ENCODE measurements at regions of chr3 and their contacts with region 1.

Region 1: DNA sequence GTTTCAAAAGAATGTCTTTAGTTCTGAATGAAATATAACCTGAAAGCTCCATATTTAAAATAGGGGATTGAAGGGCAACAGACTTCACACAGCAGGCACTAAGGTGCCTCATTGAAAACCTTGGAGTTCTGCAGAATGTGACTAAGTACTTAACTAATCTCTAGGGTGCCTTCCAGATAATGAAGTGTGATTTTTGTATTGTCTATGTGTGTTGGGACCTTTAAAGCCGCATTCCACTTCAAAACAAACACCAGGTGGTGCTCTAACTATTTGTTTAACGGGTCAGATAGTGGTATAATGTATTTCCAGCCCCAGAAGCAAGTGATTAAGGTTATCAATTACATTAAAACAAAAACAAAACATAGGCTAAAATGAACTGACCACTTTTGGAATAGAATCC is 28.0 kb downstream of the TFG start:
- DNase-seq: no peak
- H3K4me3 ChIP-seq: no peak overlapping the region
- H3K27ac ChIP-seq: no peak overlapping the region
- H3K4me1 ChIP-seq: no peaks in the 10 kb centered on the region
- H3K27me3 ChIP-seq: no peaks in the 10 kb centered on the region
- CTCF ChIP-seq: peak; percentile 76

Region 2: DNA sequence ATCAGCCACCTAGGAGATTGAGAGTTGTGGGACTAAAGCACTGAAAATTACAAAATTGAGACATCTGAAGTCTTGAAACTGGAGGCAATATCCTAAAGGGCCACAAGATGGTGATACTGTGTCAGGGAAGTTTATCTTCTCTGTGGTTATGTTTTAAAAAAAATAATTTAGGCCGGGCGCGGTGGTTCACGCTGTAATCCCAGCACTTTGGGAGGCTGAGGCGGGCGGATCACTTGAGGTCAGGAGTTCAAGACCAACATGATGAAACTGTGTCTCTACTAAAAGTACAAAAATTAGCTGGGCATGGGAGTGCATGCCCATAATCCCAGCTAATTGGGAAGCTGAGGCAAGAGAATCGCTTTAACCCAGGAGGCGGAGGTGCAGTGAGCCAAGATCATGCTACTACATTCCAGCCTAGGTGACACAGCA is 420.7 kb before region 1 on chr3:
- CTCF ChIA-PET with region 1: no interaction called
- POLR2A ChIA-PET with region 1: no interaction called
- intact Hi-C with region 1: loop called (anchors 10 kb)
- DNase-seq: peak; percentile 33 to 59
- H3K4me3 ChIP-seq: no peak overlapping the region
- H3K27ac ChIP-seq: no peak overlapping the region
- H3K4me1 ChIP-seq: no peaks in the 10 kb centered on the region
- H3K27me3 ChIP-seq: no peaks in the 10 kb centered on the region
- CTCF ChIP-seq: peak; percentile 93

Region 3: DNA sequence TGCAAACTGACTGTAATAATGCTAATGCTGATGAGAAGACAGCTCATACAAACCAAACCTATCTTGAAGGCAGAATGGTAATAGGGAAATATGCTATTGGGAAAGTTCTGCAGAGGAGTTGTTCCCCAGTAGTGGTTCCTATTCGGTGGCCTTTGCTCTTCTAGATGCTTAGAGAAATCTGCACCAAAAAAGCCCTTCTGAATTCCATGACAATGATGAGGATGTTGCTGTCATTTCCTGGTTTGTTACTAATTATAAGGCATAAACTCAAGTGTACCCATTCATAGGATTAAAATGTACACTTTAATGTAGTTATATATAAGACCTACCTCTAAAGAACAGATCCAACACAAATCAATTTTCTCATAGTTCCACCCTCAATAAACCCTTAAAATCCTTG is 366.6 kb before region 1 on chr3:
- CTCF ChIA-PET with region 1: no interaction called
- POLR2A ChIA-PET with region 1: no interaction called
- intact Hi-C with region 1: loop called (anchors 10 kb)
- DNase-seq: no peak
- H3K4me3 ChIP-seq: no peak overlapping the region
- H3K27ac ChIP-seq: no peak overlapping the region
- H3K4me1 ChIP-seq: no peaks in the 10 kb centered on the region
- H3K27me3 ChIP-seq: no peaks in the 10 kb centered on the region
- CTCF ChIP-seq: no peak

Region 4: DNA sequence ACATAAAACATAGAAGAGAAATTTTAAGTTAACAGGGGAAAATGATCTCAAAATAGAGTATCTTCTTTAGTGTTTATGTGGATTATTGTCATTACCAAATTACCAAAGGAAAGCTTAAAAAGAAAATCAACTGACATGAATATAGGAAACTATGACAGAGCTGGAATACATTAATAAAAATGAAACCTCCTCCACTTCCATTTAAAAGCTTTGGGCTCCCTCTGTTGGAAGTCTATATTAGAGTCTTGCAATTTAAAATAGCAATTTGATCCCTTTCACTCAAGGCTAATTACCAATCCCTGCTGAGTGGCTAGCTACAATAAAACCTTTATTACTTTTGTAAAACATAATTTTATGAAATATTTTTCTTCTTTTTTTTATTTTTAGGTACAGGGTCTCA is 644.5 kb after region 1 on chr3:
- CTCF ChIA-PET with region 1: no interaction called
- POLR2A ChIA-PET with region 1: no interaction called
- intact Hi-C with region 1: loop called (anchors 5 kb)
- DNase-seq: peak in 1 of 2 experiments; percentile 46
- H3K4me3 ChIP-seq: no peak overlapping the region
- H3K27ac ChIP-seq: no peak overlapping the region
- H3K4me1 ChIP-seq: no peaks in the 10 kb centered on the region
- H3K27me3 ChIP-seq: no peaks in the 10 kb centered on the region
- CTCF ChIP-seq: peak; percentile 83

Region 5: DNA sequence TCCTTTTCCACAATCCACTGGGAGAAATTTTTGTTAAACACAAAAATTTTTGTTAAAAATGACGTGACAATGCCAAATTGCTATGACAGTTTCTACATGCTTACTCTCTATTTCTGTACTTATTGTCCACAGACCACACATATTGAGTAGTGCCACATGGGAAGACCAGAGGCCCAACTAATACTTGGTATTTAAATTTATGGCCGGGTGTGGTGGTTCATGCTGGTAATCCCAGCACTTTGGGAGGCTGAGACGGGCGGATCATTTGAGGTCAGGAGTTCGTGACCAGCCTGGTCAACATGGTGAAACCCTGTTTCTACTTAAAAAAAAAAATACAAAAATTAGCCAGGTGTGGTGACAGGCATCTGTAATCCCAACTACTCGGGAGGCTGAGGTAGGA is 919.3 kb after region 1 on chr3:
- CTCF ChIA-PET with region 1: no interaction called
- POLR2A ChIA-PET with region 1: no interaction called
- intact Hi-C with region 1: loop called (anchors 10 kb)
- DNase-seq: no peak
- H3K4me3 ChIP-seq: no peak overlapping the region
- H3K27ac ChIP-seq: no peak overlapping the region
- H3K4me1 ChIP-seq: no peaks in the 10 kb centered on the region
- H3K27me3 ChIP-seq: no peaks in the 10 kb centered on the region
- CTCF ChIP-seq: no peak

Measured in PC-9 (cell line).